Activated T-helper 1 cell treated with anti-CD3 and anti-CD28 coated beads, Interleukin-12 subunit alpha, Interleukin-12 subunit beta, Interleukin-2, Interleukin-4 antibody, amounts not matched to agents 30 ng/mL and 10 ng/mL and 1 ng/mL, durations not matched to agents 14 hours and 24 hours and 36 hours (primary cell): ENCODE measurements at regions of chr1 and their contacts with region 1.

Region 1: GRCh38 chr1:20932437-20932977 is 145.4 kb upstream of the HP1BP3 start:
- DNase-seq: no peak
- H3K4me3 Mint-ChIP-seq: peak overlapping the region; percentile 19
- H3K27ac Mint-ChIP-seq: peak overlapping the region; percentile 78
- H3K4me1 Mint-ChIP-seq: peaks cover 19% of the 10 kb centered on the region
- H3K27me3 Mint-ChIP-seq: no peaks in the 10 kb centered on the region

Region 2: GRCh38 chr1:20786253-20787028 is 146.1 kb before region 1 on chr1:
- intact Hi-C with region 1: loop called (anchors 1 kb)
- DNase-seq: peak; percentile 95
- H3K4me3 Mint-ChIP-seq: peak overlapping the region; percentile 91
- H3K27ac Mint-ChIP-seq: peak overlapping the region; percentile 97
- H3K4me1 Mint-ChIP-seq: peaks cover 26% of the 10 kb centered on the region
- H3K27me3 Mint-ChIP-seq: peaks cover 5% of the 10 kb centered on the region

Region 3: GRCh38 chr1:20992322-20993056 is 60.0 kb after region 1 on chr1:
- intact Hi-C with region 1: loop called (anchors 1 kb)
- DNase-seq: no peak
- H3K4me3 Mint-ChIP-seq: peak overlapping the region; percentile 61
- H3K27ac Mint-ChIP-seq: peak overlapping the region; percentile 89
- H3K4me1 Mint-ChIP-seq: peaks cover 52% of the 10 kb centered on the region
- H3K27me3 Mint-ChIP-seq: no peaks in the 10 kb centered on the region

Region 4: GRCh38 chr1:21022279-21023040 is 90.0 kb after region 1 on chr1:
- intact Hi-C with region 1: loop called (anchors 1 kb)
- DNase-seq: peak; percentile 30
- H3K4me3 Mint-ChIP-seq: peak overlapping the region; percentile 63
- H3K27ac Mint-ChIP-seq: peak overlapping the region; percentile 86
- H3K4me1 Mint-ChIP-seq: peaks cover 26% of the 10 kb centered on the region
- H3K27me3 Mint-ChIP-seq: no peaks in the 10 kb centered on the region

Region 5: GRCh38 chr1:21176586-21177555 is 244.4 kb after region 1 on chr1 and contains the start of gene EIF4G3:
- intact Hi-C with region 1: loop called (anchors 5 kb)
- DNase-seq: peak; percentile 99
- H3K4me3 Mint-ChIP-seq: peak within 1 kb of the TSS; percentile 89
- H3K27ac Mint-ChIP-seq: peak within 1 kb of the TSS; percentile 94
- H3K4me1 Mint-ChIP-seq: peaks cover 25% of the 10 kb centered on the region
- H3K27me3 Mint-ChIP-seq: no peaks in the 10 kb centered on the region
- total RNA-seq, gene EIF4G3: 67.5 and 69.3 TPM in 2 replicates

Region 6: DNA sequence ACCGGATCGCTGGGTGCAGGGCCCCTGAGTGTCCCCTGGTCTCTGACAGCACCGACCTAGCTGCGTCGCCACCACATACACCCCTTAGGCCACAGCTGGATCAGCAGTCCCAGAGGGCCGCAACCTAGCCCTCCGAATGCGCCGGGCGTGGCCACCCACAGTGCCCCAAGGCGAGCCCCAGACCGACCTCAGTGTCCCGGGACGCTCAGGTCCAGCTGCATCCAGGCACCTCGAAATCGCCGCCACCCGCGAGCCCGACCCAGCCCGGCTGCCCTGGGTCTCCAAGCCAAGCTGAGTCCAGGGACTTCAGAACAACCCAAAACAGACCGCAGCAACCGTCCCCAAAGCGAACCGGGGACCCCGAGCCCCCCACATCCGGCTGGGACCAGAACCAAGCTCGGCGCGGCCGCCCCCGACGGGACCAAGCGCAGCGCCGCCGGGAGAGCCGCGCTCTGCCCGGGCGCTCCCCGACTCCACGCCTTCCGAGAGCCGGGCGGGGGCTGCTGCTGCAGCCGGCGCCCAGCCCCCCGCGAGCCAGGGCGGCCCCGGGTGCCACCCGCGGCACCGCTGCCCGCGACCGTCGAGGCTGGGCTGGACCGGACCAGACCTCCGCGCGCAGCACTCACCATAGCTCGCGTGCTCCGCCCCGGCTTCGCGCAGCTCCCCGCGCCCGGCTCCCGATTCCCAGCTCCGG is 412.4 kb after region 1 on chr1:
- intact Hi-C with region 1: loop called (anchors 5 kb)
- DNase-seq: no peak
- H3K4me3 Mint-ChIP-seq: peak overlapping the region; percentile 97
- H3K27ac Mint-ChIP-seq: peak overlapping the region; percentile 76
- H3K4me1 Mint-ChIP-seq: peaks cover 37% of the 10 kb centered on the region
- H3K27me3 Mint-ChIP-seq: no peaks in the 10 kb centered on the region